Gastrocnemius medialis (tissue), 4 donors: ENCODE measurements at regions of chr21 and their contacts with region 1.

Region 1: GRCh38 chr21:38126669-38127303 is 130.0 kb upstream of the KCNJ15 start:
- DNase-seq: peak in 1 of 2 donors; percentile 22
- ATAC-seq: peak in 1 of 2 donors; percentile 70
- H3K4me3 ChIP-seq: no peak overlapping the region
- H3K27ac ChIP-seq: no peak overlapping the region
- H3K4me1 ChIP-seq: no peaks in the 10 kb centered on the region
- H3K27me3 ChIP-seq: no peaks in the 10 kb centered on the region
- CTCF ChIP-seq: peak in 4 of 5 experiments; percentile 39 to 60 (median 44)
- POLR2A ChIP-seq: no peak

Region 2: DNA sequence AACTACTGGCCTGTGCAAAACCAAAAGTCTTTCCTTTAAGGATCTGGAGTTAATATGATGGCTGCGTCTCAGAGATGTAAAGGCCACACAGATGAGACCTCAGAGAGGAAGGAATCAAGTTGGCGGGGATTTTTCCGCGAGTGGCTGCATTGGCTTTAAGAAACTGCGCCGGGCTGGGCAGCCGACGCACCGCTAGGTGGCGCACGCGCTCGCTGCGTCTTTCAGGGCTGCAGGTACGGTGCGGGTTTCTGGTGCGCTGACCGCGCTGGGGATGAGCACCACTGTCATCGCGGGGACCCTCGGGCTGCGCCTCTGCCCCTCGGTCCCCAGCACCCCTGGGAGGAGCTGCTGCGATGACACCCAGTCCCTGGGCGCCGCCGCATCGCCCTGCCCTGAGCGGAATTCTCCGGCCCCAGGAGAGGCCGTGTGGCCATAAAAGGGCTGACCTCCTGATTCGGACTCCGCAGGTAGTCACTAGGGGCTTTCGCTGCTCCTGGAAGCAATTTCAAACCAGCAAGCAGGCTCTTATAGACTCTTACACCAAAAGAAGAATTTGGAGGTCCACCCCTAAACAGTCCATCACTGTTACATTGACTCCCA is 451.5 kb before region 1 on chr21:
- in situ Hi-C with region 1: loop called in 1 of 4 experiments (anchors 25 kb)
- intact Hi-C with region 1: no loop called
- DNase-seq: peak in 1 of 2 donors; percentile 30
- ATAC-seq: peak; percentile 42 to 62
- H3K4me3 ChIP-seq: peak overlapping the region in 2 of 4 donors; percentile 16 to 25
- H3K27ac ChIP-seq: no peak overlapping the region
- H3K4me1 ChIP-seq: peaks cover 3 to 4% of the 10 kb centered on the region in 2 donors
- H3K27me3 ChIP-seq: peaks cover 0 to 3% (median 0%) of the 10 kb centered on the region in 3 donors
- CTCF ChIP-seq: peak; percentile 60 to 97 (median 81)
- POLR2A ChIP-seq: no peak

Region 3: GRCh38 chr21:37700641-37701202 is 426.1 kb before region 1 on chr21:
- in situ Hi-C with region 1: loop called in 3 of 4 experiments (anchors 25 kb)
- intact Hi-C with region 1: no loop called
- DNase-seq: no peak
- ATAC-seq: peak in 1 of 2 donors; percentile 39
- H3K4me3 ChIP-seq: no peak overlapping the region
- H3K27ac ChIP-seq: no peak overlapping the region
- H3K4me1 ChIP-seq: no peaks in the 10 kb centered on the region
- H3K27me3 ChIP-seq: no peaks in the 10 kb centered on the region
- CTCF ChIP-seq: peak in 4 of 5 experiments; percentile 19 to 33 (median 31)
- POLR2A ChIP-seq: no peak

Region 4: GRCh38 chr21:37711836-37712568 is 414.8 kb before region 1 on chr21:
- in situ Hi-C with region 1: loop called in 2 of 4 experiments (anchors 25 kb)
- intact Hi-C with region 1: loop called (anchors 5 kb)
- DNase-seq: peak in 1 of 2 donors; percentile 21
- ATAC-seq: peak in 1 of 2 donors; percentile 80
- H3K4me3 ChIP-seq: no peak overlapping the region
- H3K27ac ChIP-seq: no peak overlapping the region
- H3K4me1 ChIP-seq: peaks cover 8 to 12% of the 10 kb centered on the region in 2 donors
- H3K27me3 ChIP-seq: no peaks in the 10 kb centered on the region
- CTCF ChIP-seq: peak; percentile 22 to 73 (median 44)
- POLR2A ChIP-seq: no peak